SK-N-SH (cell line): ENCODE measurements at regions of chr10 and their contacts with region 1.

Region 1: DNA sequence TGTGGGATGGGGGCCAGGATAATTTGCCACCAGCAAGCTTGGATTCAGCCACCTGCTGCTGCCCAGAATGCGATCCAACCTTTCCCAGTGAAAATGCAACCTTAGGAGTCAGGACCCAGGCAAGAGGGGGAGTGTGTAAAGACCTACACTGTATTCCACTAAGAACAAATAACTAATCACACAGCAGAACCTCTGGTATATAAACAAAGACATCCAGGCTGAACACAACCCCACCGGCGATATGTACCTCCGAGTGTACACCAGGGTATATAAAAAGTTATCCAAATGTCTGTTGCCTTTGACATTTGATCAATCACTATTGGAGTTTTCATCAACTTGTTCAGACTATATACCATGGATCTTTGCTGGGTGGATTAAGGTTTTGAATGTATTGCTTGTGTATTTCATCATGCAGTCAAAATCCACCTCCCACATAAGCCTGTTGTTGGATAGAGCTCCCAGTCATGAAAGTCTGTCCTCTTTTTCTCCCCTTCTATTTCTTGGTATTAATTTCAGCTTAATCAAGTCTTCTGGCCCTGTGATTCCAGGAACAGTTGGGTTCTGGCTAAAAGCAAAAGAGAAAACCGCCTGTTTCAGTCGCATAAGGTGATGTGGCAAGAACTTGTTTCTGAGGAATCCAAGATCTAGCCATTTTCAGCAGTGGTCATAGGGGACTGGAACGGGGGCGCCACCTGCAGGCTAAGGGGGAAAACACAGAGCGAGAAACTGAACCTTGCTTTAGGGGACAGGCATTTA is 290.7 kb downstream of the CCDC3 start:
- DNase-seq: peak; percentile 69
- H3K4me3 ChIP-seq: peak overlapping the region in 1 of 2 experiments; percentile 18; a peak in 1 of 4 replicates
- H3K27ac ChIP-seq: peak overlapping the region in 1 of 2 experiments; percentile 92; a peak in 1 of 4 replicates
- H3K4me1 ChIP-seq: peaks cover 15 to 49% of the 10 kb centered on the region in 2 experiments
- H3K27me3 ChIP-seq: no peaks in the 10 kb centered on the region
- CTCF ChIP-seq: peak; percentile 95
- EP300 ChIP-seq: no peak
- RAD21 ChIP-seq: peak; percentile 89

Region 2: GRCh38 chr10:12214763-12215218 is 496.0 kb before region 1 on chr10:
- CTCF ChIA-PET with region 1: interaction called, 12 read pairs
- POLR2A ChIA-PET with region 1: no interaction called
- DNase-seq: peak; percentile 47
- H3K4me3 ChIP-seq: no peak overlapping the region
- H3K27ac ChIP-seq: peak overlapping the region in 1 of 2 experiments; percentile 53; a peak in 2 of 4 replicates
- H3K4me1 ChIP-seq: peaks cover 0 to 3% of the 10 kb centered on the region in 2 experiments; a peak in 2 of 4 replicates
- H3K27me3 ChIP-seq: no peaks in the 10 kb centered on the region
- CTCF ChIP-seq: peak; percentile 89
- EP300 ChIP-seq: no peak
- RAD21 ChIP-seq: peak; percentile 52

Region 3: GRCh38 chr10:12419262-12419847 is 291.4 kb before region 1 on chr10:
- CTCF ChIA-PET with region 1: no interaction called
- POLR2A ChIA-PET with region 1: no interaction called
- DNase-seq: no peak
- H3K4me3 ChIP-seq: no peak overlapping the region
- H3K27ac ChIP-seq: peak overlapping the region in 1 of 2 experiments; percentile 80; a peak in 2 of 4 replicates
- H3K4me1 ChIP-seq: peaks cover 0 to 5% of the 10 kb centered on the region in 2 experiments; a peak in 1 of 4 replicates
- H3K27me3 ChIP-seq: no peaks in the 10 kb centered on the region
- CTCF ChIP-seq: no peak
- EP300 ChIP-seq: peak; percentile 20 to 87; a peak in 2 of 4 replicates
- RAD21 ChIP-seq: no peak

Region 4: DNA sequence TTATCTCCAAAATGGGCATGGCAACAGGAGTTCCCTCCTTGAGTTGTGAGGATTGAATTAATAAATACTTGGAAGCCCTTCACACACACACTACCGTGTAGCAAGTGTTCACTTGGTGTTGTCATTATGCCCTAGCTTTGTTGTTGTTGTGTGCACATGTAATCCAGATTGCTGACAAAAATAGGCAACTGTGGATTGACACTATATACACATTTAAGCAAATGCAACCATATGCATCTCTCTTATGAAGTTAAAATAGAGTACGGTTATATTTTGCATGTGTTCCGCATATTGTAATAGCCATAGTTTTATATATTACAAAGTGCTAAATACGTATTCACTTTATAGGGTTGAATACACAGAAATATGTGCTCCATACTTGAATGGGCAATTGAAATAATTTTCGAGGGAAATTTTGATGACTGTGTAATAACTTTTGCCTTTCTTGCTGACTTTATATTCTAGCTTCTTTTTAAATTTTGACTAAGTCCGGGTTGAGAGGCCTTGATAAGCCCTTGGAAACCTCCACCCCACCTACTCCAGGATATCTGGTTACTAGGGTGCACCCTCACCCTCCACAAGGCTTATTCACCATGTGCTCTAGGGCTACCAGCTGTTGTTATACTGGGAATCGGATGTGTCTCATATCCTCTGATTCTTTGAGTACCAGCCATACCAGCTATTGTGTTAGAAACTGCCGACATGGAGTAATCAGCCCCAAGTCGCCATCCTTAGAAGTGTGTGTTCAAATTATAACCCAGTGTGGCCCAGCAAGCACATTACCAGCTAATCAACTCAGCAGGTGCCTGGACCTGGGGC is 96.4 kb before region 1 on chr10:
- CTCF ChIA-PET with region 1: no interaction called
- POLR2A ChIA-PET with region 1: no interaction called
- DNase-seq: no peak
- H3K4me3 ChIP-seq: no peak overlapping the region
- H3K27ac ChIP-seq: no peak overlapping the region
- H3K4me1 ChIP-seq: no peaks in the 10 kb centered on the region; a peak in 2 of 4 replicates
- H3K27me3 ChIP-seq: no peaks in the 10 kb centered on the region
- CTCF ChIP-seq: no peak
- EP300 ChIP-seq: no peak
- RAD21 ChIP-seq: no peak

Region 5: DNA sequence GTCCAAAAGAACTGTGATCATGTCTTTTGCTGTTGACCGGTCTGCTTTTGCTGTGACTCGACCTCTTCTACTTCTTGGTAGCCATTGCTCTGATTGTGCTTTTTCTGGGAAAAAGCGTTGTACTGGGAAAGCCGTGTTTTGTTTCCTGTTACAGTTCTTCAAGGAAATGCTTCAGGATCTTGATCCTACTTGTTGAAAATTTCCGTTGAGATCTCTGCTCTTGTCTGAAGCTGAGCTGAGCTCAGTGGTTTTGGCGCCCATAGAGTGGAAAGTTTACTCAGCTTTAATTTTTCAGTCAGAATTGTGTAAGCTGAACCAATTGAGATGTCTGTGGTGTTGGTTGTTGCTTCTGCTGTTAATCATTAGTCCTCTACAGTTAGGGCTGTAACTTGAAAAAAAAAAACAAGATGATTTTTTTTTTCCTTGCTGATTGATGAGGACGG is 11.5 kb before region 1 on chr10:
- CTCF ChIA-PET with region 1: interaction called, 15 read pairs
- POLR2A ChIA-PET with region 1: no interaction called
- DNase-seq: no peak
- H3K4me3 ChIP-seq: no peak overlapping the region
- H3K27ac ChIP-seq: no peak overlapping the region
- H3K4me1 ChIP-seq: peaks cover 3 to 14% of the 10 kb centered on the region in 2 experiments; a peak in 2 of 4 replicates
- H3K27me3 ChIP-seq: no peaks in the 10 kb centered on the region
- CTCF ChIP-seq: no peak
- EP300 ChIP-seq: no peak
- RAD21 ChIP-seq: no peak

Region 6: DNA sequence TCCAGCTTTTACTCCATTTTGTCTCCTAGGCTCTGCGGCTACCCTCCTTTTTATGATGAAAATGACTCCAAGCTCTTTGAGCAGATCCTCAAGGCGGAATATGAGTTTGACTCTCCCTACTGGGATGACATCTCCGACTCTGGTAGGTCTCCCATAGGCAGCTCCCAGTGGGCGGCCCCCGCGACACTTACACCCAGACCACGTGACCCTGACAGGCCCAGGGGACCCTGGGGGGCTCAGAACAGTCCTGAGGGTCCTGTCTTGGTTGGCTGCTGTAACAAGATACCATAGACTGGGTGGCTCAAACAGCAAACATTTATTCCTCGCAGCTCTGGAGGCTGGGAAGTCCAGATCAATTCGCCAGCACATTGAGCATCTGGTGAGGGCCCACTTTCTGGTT is 103.4 kb after region 1 on chr10:
- CTCF ChIA-PET with region 1: no interaction called
- POLR2A ChIA-PET with region 1: no interaction called
- DNase-seq: no peak
- H3K4me3 ChIP-seq: no peak overlapping the region
- H3K27ac ChIP-seq: no peak overlapping the region
- H3K4me1 ChIP-seq: peaks cover 0 to 3% of the 10 kb centered on the region in 2 experiments; a peak in 1 of 4 replicates
- H3K27me3 ChIP-seq: no peaks in the 10 kb centered on the region
- CTCF ChIP-seq: no peak
- EP300 ChIP-seq: no peak
- RAD21 ChIP-seq: no peak

Region 7: DNA sequence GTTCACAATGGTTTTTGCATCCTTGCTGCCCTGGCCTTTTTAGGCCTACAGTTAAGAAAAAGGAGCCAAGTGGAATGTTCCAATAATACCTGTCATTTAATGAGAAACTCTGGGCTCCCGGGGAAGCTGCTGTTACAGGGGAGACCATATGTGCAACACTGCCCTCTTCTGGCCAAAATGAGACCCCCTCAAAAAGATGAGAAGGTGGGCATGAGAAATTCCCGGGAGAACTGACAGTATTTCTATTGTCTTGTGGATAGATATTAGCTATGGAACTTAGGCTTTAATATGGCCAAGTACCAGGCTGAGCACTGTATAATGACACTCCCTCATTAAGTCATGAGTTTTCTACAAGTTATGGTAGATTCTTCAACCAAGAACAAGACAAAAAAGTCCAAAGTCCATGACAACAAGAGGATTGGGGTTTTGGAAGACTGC is 191.4 kb after region 1 on chr10:
- CTCF ChIA-PET with region 1: interaction called, 76 read pairs
- POLR2A ChIA-PET with region 1: no interaction called
- DNase-seq: peak; percentile 83
- H3K4me3 ChIP-seq: no peak overlapping the region; a peak in 1 of 4 replicates
- H3K27ac ChIP-seq: no peak overlapping the region
- H3K4me1 ChIP-seq: no peaks in the 10 kb centered on the region
- H3K27me3 ChIP-seq: no peaks in the 10 kb centered on the region; the same call in 1 of the 2 replicates
- CTCF ChIP-seq: peak; percentile 86
- EP300 ChIP-seq: no peak
- RAD21 ChIP-seq: peak; percentile 89

Region 8: GRCh38 chr10:13062803-13063202 is 352.0 kb after region 1 on chr10:
- CTCF ChIA-PET with region 1: interaction called, 15 read pairs
- POLR2A ChIA-PET with region 1: no interaction called
- DNase-seq: no peak
- H3K4me3 ChIP-seq: no peak overlapping the region
- H3K27ac ChIP-seq: no peak overlapping the region
- H3K4me1 ChIP-seq: peaks cover 0 to 3% of the 10 kb centered on the region in 2 experiments; a peak in 2 of 4 replicates
- H3K27me3 ChIP-seq: no peaks in the 10 kb centered on the region; the same call in 1 of the 2 replicates
- CTCF ChIP-seq: no peak
- EP300 ChIP-seq: no peak
- RAD21 ChIP-seq: no peak

Region 9: DNA sequence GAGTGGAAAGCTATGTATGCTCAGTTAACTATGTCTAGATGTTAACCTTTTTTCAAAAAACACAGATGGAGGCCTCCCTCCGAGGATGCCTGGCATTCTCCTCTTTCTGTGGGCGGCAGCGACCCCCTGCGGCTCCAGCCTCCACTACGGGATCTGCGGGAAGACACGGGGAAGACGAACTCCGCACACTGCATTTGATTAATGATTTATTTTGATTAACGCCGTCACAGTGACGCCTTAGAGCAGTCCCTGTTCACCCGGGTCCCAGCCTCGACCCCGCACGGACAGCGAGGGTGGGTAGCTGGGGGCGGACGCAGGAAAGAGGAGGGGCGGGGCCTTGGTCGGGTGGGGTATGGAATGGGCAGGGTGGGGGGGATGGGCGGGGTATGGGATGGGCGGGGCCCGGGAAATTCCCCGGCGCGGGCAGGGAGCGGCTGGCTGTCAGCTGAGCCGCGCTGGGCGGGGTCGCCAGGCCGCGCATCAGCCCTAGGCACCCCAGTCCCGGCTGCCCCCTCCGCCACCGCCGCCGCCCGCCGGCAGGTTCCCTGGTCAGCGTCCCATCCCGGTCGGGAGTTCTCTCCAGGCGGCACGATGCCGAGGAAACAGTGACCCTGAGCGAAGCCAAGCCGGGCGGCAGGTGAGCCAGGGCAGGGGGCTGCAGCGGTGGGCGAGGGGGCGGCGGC is 389.0 kb after region 1 on chr10 and contains the start of gene OPTN:
- CTCF ChIA-PET with region 1: interaction called, 12 read pairs
- POLR2A ChIA-PET with region 1: no interaction called
- DNase-seq: peak; percentile 96
- H3K4me3 ChIP-seq: peak within 1 kb of the TSS; percentile 64 to 80
- H3K27ac ChIP-seq: peak within 1 kb of the TSS; percentile 80 to 93
- H3K4me1 ChIP-seq: peaks cover 3 to 8% of the 10 kb centered on the region in 2 experiments; a peak in 1 of 4 replicates
- H3K27me3 ChIP-seq: no peaks in the 10 kb centered on the region
- CTCF ChIP-seq: peak; percentile 91
- EP300 ChIP-seq: no peak
- RAD21 ChIP-seq: peak; percentile 66
- polyA plus RNA-seq, gene OPTN: 21.6 and 22.4 TPM in 2 replicates